ENCODE measurements at regions of chr19 and their contacts with region 1.

Region 1: DNA sequence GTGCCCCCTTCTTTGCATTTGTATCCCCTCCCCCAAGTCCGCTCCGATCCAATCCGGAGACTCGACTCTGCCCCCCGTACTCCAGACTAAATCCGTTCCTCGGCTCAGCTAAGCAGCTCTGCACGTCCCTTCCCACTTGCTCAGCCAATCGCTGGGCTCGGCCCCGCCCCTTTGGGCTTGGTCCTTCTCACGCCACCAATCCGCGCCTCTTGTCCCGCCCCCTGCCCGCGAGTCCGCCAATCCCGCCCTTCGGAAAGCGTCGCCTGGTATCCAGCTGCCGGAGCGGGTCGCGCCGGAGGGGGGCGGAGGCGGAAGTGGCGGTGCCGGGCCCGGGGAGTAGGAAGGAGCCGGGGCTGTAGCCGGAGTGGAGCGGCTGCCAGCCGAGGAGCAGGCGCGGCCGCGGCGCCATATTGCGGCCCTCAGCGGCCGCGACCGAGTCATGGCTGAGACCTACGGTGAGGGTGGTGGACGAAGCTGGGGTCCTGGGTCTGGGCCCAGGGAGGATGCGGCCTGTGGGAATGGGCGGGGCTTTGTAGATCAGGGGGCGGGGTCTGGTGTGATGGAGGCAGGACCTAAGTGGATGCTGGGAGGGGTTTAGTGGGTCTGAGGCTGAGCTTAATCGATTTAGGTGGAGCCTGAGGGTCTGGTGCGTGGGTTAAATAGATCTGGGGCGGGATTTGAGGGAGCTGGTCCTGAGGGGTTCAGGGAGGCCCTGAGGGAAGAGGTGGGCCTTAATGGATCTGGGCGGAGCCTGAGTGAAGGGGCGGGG is at the start of gene RAB4B:
- DNase-seq: peak; percentile 99
- ATAC-seq: peak; percentile 87
- H3K4me3 ChIP-seq: peak within 1 kb of the TSS; percentile 70
- H3K27ac ChIP-seq: peak within 1 kb of the TSS; percentile 100
- H3K4me1 ChIP-seq: peaks cover 39% of the 10 kb centered on the region
- H3K27me3 ChIP-seq: no peaks in the 10 kb centered on the region
- CTCF ChIP-seq: no peak
- EP300 ChIP-seq: peak in 1 of 2 experiments; percentile 18; a peak in 1 of 4 replicates
- POLR2A ChIP-seq: peak; percentile 95
- RAD21 ChIP-seq: no peak
- polyA plus RNA-seq, gene RAB4B: 0.60 to 3.2 TPM

Region 2: DNA sequence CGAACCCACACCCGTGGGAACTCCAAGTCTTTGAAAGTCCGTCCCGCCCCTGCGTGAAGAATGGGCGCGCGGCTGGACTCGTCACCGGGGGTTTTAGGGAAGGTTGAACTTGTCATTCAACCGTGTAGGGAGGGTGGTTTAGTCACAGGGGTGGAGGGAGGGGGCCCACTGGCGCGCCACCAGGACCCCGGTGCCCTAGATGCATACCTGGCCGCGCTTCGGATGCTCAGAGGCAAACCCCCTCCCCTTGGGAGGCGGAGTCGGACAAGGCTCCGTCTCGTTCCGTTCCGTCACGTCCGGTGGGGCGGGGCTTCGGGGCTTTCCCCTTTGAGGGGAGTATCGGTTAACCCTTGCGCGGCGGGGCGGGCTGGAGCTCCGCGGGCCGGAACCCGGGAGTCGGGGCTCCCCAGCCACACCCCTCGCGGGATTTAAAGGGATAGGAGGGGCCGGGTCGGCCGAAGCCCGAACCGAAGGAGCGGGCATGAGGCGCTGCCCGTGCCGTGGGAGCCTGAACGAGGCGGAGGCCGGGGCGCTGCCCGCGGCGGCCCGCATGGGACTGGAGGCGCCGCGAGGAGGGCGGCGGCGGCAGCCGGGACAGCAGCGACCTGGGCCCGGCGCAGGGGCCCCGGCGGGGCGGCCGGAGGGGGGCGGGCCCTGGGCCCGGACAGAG is 61.3 kb before region 1 on chr19 and contains the starts of genes COQ8B and ITPKC:
- CTCF ChIA-PET with region 1: interaction called, 10 read pairs
- POLR2A ChIA-PET with region 1: interaction called, 39 read pairs
- RAD21 ChIA-PET with region 1: interaction called, 24 read pairs
- SMC1A ChIA-PET with region 1: interaction called, 16 read pairs
- in situ Hi-C with region 1: no loop called
- intact Hi-C with region 1: loop called (anchors 1 kb)
- DNase-seq: peak; percentile 88
- ATAC-seq: peak; percentile 72
- H3K4me3 ChIP-seq: peak within 1 kb of the TSS; percentile 79
- H3K27ac ChIP-seq: peak within 1 kb of the TSS; percentile 94
- H3K4me1 ChIP-seq: peaks cover 18% of the 10 kb centered on the region
- H3K27me3 ChIP-seq: no peaks in the 10 kb centered on the region
- CTCF ChIP-seq: no peak
- EP300 ChIP-seq: peak in 1 of 2 experiments; percentile 64; a peak in 2 of 4 replicates
- POLR2A ChIP-seq: peak; percentile 73
- RAD21 ChIP-seq: no peak
- polyA plus RNA-seq, gene COQ8B: 0.39 to 0.57 TPM
- polyA plus RNA-seq, gene ITPKC: 0.03 to 0.26 TPM

Region 3: DNA sequence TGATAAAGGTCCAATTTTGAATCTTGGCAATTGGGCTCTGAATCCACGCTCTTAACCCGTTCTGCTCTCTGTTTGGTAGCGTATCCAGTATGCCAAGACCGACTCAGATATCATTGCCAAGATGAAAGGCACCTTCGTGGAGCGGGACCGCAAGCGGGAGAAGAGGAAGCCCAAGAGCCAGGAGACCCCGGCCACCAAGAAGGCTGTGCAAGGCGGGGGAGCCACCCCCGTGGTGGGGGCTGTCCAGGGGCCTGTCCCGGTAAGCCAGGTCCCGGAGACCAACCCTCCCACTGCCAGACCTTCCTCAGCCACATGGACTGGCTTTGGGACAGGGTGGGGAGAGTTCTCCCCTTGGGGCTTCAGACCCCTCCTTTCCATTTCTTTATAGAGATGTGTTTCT is 18.8 kb before region 1 on chr19:
- CTCF ChIA-PET with region 1: interaction called, 72 read pairs
- POLR2A ChIA-PET with region 1: interaction called, 331 read pairs
- RAD21 ChIA-PET with region 1: interaction called, 291 read pairs
- SMC1A ChIA-PET with region 1: interaction called, 256 read pairs
- in situ Hi-C with region 1: no loop called
- intact Hi-C with region 1: loop called (anchors 1 kb)
- DNase-seq: no peak
- ATAC-seq: no peak
- H3K4me3 ChIP-seq: no peak overlapping the region
- H3K27ac ChIP-seq: no peak overlapping the region
- H3K4me1 ChIP-seq: peaks cover 16% of the 10 kb centered on the region
- H3K27me3 ChIP-seq: no peaks in the 10 kb centered on the region
- CTCF ChIP-seq: no peak
- EP300 ChIP-seq: no peak
- POLR2A ChIP-seq: no peak
- RAD21 ChIP-seq: no peak

Region 4: DNA sequence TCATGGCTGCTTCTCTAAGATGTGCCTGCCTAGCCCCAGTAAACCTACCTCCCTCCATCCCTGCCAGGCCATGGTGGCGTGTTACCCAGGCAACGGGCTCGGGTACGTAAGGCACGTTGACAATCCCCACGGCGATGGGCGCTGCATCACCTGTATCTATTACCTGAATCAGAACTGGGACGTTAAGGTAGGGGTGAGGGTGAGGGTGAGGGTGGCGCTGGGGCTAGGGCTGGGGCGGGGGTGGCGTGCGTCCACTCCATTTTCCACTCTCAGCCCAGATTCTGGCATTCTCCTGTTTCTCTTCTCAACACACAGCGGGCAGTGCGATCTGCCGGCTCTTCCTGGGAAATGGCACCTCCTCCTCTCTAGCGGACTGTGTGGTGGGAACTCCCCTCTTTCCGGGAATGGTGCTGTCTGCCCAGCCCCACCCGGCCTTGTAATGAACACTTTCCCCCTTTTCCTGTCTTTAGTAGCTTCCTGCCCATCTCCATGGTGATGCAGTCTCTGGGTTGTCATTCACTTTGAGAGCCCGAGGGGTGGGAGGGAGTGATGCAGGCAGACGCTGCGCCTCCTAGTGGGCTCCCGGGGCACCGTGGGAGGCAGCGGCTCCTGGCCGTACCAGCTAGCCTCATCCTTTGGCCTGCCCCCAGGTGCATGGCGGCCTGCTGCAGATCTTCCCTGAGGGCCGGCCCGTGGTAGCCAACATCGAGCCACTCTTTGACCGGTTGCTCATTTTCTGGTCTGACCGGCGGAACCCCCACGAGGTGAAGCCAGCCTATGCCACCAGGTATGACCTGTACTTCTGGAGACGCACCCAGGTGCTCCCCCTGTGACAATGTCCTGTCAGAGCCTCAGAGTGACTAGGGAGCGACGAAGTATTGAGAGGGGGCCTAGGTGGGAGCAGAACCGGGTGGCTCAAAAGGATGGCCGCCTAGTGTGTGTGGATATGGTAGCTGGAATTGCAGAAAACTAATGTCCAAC is 28.7 kb after region 1 on chr19:
- CTCF ChIA-PET with region 1: interaction called, 28 read pairs
- POLR2A ChIA-PET with region 1: interaction called, 37 read pairs
- RAD21 ChIA-PET with region 1: interaction called, 29 read pairs
- SMC1A ChIA-PET with region 1: interaction called, 24 read pairs
- in situ Hi-C with region 1: no loop called
- intact Hi-C with region 1: no loop called
- DNase-seq: no peak
- ATAC-seq: peak; percentile 77
- H3K4me3 ChIP-seq: no peak overlapping the region
- H3K27ac ChIP-seq: no peak overlapping the region
- H3K4me1 ChIP-seq: peaks cover 40% of the 10 kb centered on the region
- H3K27me3 ChIP-seq: no peaks in the 10 kb centered on the region
- CTCF ChIP-seq: peak; percentile 80 to 95 (median 87)
- EP300 ChIP-seq: no peak
- POLR2A ChIP-seq: peak; percentile 52
- RAD21 ChIP-seq: peak; percentile 53

Region 5: GRCh38 chr19:41263850-41264580 is 485.9 kb after region 1 on chr19 and contains the start of gene HNRNPUL1:
- CTCF ChIA-PET with region 1: no interaction called
- POLR2A ChIA-PET with region 1: interaction called, 10 read pairs
- RAD21 ChIA-PET with region 1: interaction called, 3 read pairs
- SMC1A ChIA-PET with region 1: interaction called, 3 read pairs
- in situ Hi-C with region 1: no loop called
- intact Hi-C with region 1: no loop called
- DNase-seq: peak; percentile 100
- ATAC-seq: peak; percentile 75
- H3K4me3 ChIP-seq: peak within 1 kb of the TSS; percentile 95
- H3K27ac ChIP-seq: peak within 1 kb of the TSS; percentile 100
- H3K4me1 ChIP-seq: no peaks in the 10 kb centered on the region
- H3K27me3 ChIP-seq: no peaks in the 10 kb centered on the region
- CTCF ChIP-seq: peak; percentile 20 to 26 (median 24); a peak in 2 of 6 replicates
- EP300 ChIP-seq: peak in 1 of 2 experiments; percentile 47; a peak in 1 of 4 replicates
- POLR2A ChIP-seq: 0 out of 2 replicates have a peak, but pooled peaks have one; percentile 2
- RAD21 ChIP-seq: no peak
- polyA plus RNA-seq, gene HNRNPUL1: 11.1 to 26.3 TPM